Activated B cell treated with CpG ODN at 0.5 μM for 24 hours (primary cell): ENCODE measurements at regions of chr9 and their contacts with region 1.

Region 1: GRCh38 chr9:110192531-110193261 is 15.3 kb downstream of the C9orf152 start:
- DNase-seq: no peak
- ATAC-seq: no peak
- H3K4me3 Mint-ChIP-seq: no peak overlapping the region
- H3K27ac Mint-ChIP-seq: no peak overlapping the region
- H3K4me1 Mint-ChIP-seq: peaks cover 6% of the 10 kb centered on the region
- H3K27me3 Mint-ChIP-seq: no peaks in the 10 kb centered on the region
- CTCF ChIP-seq: no peak

Region 2: DNA sequence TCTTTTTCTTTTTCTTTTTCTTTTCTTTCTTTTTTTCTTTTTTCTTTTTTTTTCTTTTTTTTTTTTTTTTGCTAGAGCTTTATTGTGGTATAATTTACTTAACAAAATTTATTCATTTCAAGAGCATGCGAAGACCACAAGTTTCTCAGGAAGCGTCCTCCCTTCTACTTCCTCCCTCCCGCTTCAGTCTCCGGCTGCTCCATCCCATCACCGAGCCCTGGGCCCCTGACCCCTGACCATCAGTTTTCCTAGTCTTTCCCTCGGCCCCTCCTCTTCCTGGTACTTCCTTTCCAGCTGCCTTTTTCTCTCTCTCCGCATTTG is 19.4 kb before region 1 on chr9:
- CTCF ChIA-PET with region 1: no interaction called
- POLR2A ChIA-PET with region 1: interaction called, 11 read pairs
- intact Hi-C with region 1: no loop called
- DNase-seq: no peak
- ATAC-seq: no peak
- H3K4me3 Mint-ChIP-seq: no peak overlapping the region
- H3K27ac Mint-ChIP-seq: peak overlapping the region; percentile 56
- H3K4me1 Mint-ChIP-seq: peaks cover 6% of the 10 kb centered on the region
- H3K27me3 Mint-ChIP-seq: no peaks in the 10 kb centered on the region
- CTCF ChIP-seq: no peak

Region 3: DNA sequence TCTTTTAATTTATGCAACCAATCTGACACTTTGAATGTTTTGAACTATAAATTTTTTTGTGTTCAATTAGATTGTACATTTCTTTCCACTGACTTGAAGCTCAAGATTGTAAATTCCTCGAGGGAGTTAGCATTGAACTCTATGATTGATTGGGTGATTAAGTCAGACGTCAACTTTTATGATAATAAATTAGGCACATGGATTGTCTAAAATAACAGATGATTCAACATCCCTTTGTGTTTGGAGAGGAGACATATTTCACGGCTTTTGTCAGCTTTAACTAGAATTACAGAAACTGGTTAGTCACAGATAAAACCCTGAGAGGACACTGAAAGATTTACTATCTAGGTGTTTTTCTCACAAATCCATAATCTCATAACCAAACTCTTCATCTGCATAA is 177.6 kb after region 1 on chr9:
- CTCF ChIA-PET with region 1: no interaction called
- POLR2A ChIA-PET with region 1: no interaction called
- intact Hi-C with region 1: no loop called
- DNase-seq: no peak
- ATAC-seq: no peak
- H3K4me3 Mint-ChIP-seq: no peak overlapping the region
- H3K27ac Mint-ChIP-seq: no peak overlapping the region
- H3K4me1 Mint-ChIP-seq: no peaks in the 10 kb centered on the region
- H3K27me3 Mint-ChIP-seq: peaks cover 5% of the 10 kb centered on the region
- CTCF ChIP-seq: no peak